Esophagus muscularis mucosa (tissue), 4 donors: ENCODE measurements at regions of chr1 and their contacts with region 1.

Region 1: GRCh38 chr1:67053785-67054772 is at the start of gene SLC35D1:
- DNase-seq: no peak
- H3K4me3 ChIP-seq: peak within 1 kb of the TSS; percentile 73 to 88 (median 86)
- H3K27ac ChIP-seq: peak within 1 kb of the TSS; percentile 93 to 98 (median 97)
- H3K4me1 ChIP-seq: peaks cover 20 to 30% (median 24%) of the 10 kb centered on the region in 4 donors
- H3K27me3 ChIP-seq: no peaks in the 10 kb centered on the region
- CTCF ChIP-seq: no peak
- EP300 ChIP-seq: no peak
- POLR2A ChIP-seq: no peak
- total RNA-seq, gene SLC35D1: 7.5 to 9.4 (median 8.2) TPM

Region 2: GRCh38 chr1:66890621-66891020 is 163.5 kb before region 1 on chr1:
- intact Hi-C with region 1: no loop called
- DNase-seq: no peak
- H3K4me3 ChIP-seq: no peak overlapping the region
- H3K27ac ChIP-seq: no peak overlapping the region
- H3K4me1 ChIP-seq: no peaks in the 10 kb centered on the region
- H3K27me3 ChIP-seq: no peaks in the 10 kb centered on the region
- CTCF ChIP-seq: no peak
- EP300 ChIP-seq: no peak
- POLR2A ChIP-seq: no peak

Region 3: DNA sequence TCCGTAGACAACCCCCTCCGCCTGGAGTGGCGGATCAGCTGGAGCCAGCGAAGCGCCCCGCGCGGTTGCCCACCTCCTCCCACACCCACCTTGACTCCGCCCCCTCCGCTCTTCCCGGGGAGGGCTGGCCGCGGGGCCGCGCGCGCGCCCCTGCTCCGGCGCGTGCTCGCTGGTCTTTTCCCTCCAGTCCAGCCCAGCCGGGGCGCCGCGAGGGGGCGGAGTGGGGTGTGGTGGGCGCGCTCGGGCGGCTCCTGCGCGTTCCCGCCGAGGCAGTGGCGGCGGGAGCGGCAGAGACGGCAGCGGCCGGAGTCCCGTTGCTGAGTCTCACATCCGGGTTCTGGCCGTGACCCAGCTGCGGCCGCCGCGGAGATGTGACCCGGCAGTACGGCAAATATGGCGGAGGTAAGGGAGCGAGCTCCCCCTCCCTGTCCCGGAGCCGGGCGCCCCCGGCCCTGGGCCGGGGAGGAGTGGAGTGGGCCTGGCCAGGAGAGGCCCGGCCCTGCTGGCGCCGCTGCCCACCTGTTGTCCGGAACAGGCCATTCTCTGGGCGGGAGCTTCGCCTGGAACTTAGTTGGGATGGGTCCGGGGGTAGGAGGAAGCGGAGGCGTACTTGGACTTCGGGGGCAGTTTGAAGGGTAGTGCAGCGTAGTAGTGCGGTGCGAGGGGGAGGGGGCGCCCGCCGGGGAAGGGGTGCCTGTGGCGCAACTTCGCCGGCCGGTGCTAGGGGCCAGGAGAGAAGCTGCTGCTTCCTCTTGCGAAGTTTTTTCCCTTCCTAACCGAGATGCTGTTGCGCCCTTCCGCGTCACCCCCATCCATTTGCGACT is 123.9 kb before region 1 on chr1:
- intact Hi-C with region 1: loop called (anchors 5 kb)
- DNase-seq: peak; percentile 97
- H3K4me3 ChIP-seq: peak overlapping the region; percentile 87 to 91 (median 88)
- H3K27ac ChIP-seq: peak overlapping the region; percentile 98 to 99 (median 98)
- H3K4me1 ChIP-seq: peaks cover 39 to 75% (median 64%) of the 10 kb centered on the region in 4 donors
- H3K27me3 ChIP-seq: no peaks in the 10 kb centered on the region
- CTCF ChIP-seq: peak; percentile 45 to 54 (median 51)
- EP300 ChIP-seq: no peak
- POLR2A ChIP-seq: peak; percentile 43

Region 4: DNA sequence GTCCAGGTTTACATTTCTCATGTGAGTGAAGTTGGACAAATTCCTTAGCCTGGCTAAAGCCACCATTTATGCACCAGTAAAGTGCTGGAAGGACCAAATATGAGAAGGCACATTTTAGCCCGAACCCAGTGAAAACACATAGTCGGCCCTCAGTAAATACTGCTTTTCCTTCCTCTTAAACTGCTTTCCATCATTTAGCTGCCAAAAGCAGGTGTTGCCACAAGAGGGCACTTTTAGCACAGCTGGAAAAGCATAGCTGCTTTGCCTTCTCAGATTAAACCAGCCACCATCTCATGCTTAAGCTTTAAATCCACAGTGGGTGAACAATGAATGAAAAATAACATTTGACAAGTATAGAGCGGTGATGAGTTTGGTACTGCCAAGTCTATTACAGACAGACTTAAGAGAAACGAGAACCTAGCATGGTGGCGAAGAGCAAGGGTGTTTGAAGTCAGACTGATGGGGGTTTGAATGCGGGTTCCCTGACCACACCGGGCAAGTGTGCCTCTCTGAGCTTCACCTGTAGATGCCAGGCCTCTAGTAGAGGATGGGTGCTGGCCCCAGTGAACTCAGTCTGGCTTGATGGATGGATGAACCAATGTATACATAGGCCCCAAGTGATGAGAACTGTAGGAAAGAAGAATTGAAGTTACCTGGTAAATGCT is 57.9 kb before region 1 on chr1:
- intact Hi-C with region 1: loop called (anchors 5 kb)
- DNase-seq: no peak
- H3K4me3 ChIP-seq: no peak overlapping the region
- H3K27ac ChIP-seq: peak overlapping the region in 1 of 4 donors; percentile 7
- H3K4me1 ChIP-seq: peaks cover 2 to 28% (median 23%) of the 10 kb centered on the region in 4 donors
- H3K27me3 ChIP-seq: no peaks in the 10 kb centered on the region
- CTCF ChIP-seq: peak; percentile 73 to 80 (median 79)
- EP300 ChIP-seq: no peak
- POLR2A ChIP-seq: no peak

Region 5: DNA sequence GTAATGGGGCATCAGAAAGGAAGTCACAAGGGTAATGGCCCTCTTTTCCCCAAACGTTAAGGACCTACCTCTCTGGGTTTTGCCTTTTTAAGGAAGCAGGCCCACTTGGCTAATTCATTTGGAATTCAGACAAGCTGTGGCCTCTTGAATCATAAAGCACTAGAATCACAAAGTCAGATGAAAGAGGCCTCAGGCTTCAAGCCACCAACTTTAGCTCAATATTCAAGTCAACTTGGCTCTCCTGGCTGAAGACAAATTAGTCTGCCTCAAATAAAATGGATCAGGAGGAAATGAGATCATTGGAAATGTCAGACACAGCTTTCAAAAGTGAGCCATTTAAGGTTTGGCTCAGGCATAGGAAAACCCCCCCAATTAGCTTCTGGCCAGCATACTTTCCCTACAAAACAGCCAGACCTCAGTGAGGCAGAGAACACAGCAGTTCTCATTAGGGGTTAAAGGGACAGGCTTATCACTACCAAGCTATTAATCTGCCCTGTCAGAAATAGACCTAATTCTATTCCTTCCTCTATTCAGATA is 34.4 kb before region 1 on chr1:
- intact Hi-C with region 1: loop called (anchors 5 kb)
- DNase-seq: no peak
- H3K4me3 ChIP-seq: no peak overlapping the region
- H3K27ac ChIP-seq: peak overlapping the region; percentile 58 to 75 (median 68)
- H3K4me1 ChIP-seq: peaks cover 26 to 38% (median 35%) of the 10 kb centered on the region in 4 donors
- H3K27me3 ChIP-seq: no peaks in the 10 kb centered on the region
- CTCF ChIP-seq: no peak
- EP300 ChIP-seq: no peak
- POLR2A ChIP-seq: no peak

Region 6: GRCh38 chr1:67149179-67149770 is 95.2 kb after region 1 on chr1:
- intact Hi-C with region 1: loop called (anchors 5 kb)
- DNase-seq: no peak
- H3K4me3 ChIP-seq: no peak overlapping the region
- H3K27ac ChIP-seq: no peak overlapping the region
- H3K4me1 ChIP-seq: peaks cover 7 to 10% (median 9%) of the 10 kb centered on the region in 4 donors
- H3K27me3 ChIP-seq: no peaks in the 10 kb centered on the region
- CTCF ChIP-seq: peak; percentile 63 to 82 (median 79)
- EP300 ChIP-seq: no peak
- POLR2A ChIP-seq: no peak